ENCODE measurements at regions of chr22 and their contacts with region 1.

Region 1: DNA sequence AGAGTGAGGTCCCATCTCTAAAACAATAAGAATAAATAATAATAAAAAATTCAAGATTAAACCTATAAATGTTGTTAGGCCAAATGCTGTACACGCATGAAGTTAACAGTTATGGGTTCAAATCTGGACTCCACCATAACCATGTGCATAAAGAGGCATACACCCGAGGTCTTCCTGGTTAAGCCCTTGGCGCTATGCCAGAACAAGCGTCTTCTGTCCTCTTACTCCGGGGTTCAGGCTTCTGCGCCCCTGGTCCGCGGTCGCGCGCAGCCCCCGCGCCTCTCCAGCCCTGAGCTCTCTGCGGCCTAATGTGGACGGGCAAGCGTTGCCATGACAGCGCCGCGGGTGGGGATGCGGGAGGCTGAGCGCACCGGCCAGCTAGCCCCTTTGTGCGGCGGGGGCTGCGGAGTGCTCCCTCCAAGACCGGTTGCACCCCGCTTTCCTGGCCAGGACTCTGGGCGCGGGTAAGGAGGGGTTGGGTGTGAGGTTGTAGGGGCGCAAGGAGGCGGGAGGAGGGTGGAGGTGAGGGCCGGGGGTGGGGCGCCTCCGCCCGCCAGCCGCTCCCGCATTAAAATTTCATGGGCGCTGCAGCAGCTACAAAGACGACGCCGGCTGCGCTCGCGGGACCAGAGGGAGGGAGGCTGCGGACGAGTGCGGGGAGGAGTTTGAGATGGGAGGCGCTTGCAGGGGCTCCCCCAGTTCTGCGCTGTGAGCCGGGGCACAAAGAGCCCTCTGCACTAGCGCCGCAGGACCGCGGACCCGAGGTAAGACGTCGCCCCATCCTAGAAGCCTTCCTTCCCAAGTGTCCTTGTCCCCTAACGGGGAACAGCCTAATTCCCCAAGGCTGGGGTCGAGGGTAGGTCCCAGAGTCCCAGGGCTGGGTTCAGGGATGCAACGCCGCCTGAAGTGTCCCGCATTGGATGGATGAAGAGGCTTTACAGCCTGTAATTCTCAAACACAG is at the start of gene MIAT:
- DNase-seq: peak; percentile 90
- ATAC-seq: peak; percentile 90
- H3K4me3 Mint-ChIP-seq: peak within 1 kb of the TSS; percentile 86
- H3K27ac Mint-ChIP-seq: peak within 1 kb of the TSS; percentile 90
- H3K4me1 Mint-ChIP-seq: peaks cover 31% of the 10 kb centered on the region
- H3K27me3 Mint-ChIP-seq: peaks cover 4% of the 10 kb centered on the region
- total RNA-seq, gene MIAT: 66.5 to 125 TPM

Region 2: DNA sequence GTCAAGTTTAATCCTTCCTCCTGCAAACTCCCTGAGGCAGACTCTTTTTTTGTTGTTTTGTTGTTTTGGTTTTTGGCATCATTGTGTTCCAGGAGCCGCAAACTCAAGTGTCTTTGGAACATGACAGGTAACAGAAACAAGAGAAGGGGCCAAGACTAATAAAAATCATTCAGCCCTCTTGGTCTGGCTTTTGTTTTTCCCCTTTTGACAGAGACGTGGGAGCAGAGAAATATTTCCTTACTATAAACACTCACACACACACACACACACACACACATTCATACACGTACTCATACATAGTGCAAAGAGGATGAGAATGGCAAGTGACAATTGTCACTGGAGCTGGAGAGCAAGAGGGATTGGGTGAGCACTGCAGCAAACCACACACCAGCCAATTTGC is 238.6 kb before region 1 on chr22:
- CTCF ChIA-PET with region 1: no interaction called
- DNase-seq: no peak
- ATAC-seq: no peak
- H3K4me3 Mint-ChIP-seq: no peak overlapping the region
- H3K27ac Mint-ChIP-seq: no peak overlapping the region
- H3K4me1 Mint-ChIP-seq: peaks cover 2% of the 10 kb centered on the region
- H3K27me3 Mint-ChIP-seq: peaks cover 53% of the 10 kb centered on the region

Region 3: GRCh38 chr22:26672590-26673468 is 15.7 kb after region 1 on chr22:
- CTCF ChIA-PET with region 1: interaction called, 14 read pairs
- DNase-seq: peak; percentile 98
- ATAC-seq: peak; percentile 67
- H3K4me3 Mint-ChIP-seq: peak overlapping the region; percentile 93
- H3K27ac Mint-ChIP-seq: peak overlapping the region; percentile 97
- H3K4me1 Mint-ChIP-seq: peaks cover 70% of the 10 kb centered on the region
- H3K27me3 Mint-ChIP-seq: no peaks in the 10 kb centered on the region